Psoas muscle (tissue), 8 donors: ENCODE measurements at regions of chrX and their contacts with region 1.

Region 1: GRCh38 chrX:1649621-1650020 is 34.8 kb downstream of the ASMT start:
- DNase-seq: no peak
- ATAC-seq: no peak
- H3K4me3 ChIP-seq: no peak overlapping the region
- H3K27ac ChIP-seq: no peak overlapping the region
- H3K4me1 ChIP-seq: no peaks in the 10 kb centered on the region
- H3K27me3 ChIP-seq: peaks cover 0 to 18% (median 0%) of the 10 kb centered on the region in 3 donors
- CTCF ChIP-seq: no peak

Region 2: DNA sequence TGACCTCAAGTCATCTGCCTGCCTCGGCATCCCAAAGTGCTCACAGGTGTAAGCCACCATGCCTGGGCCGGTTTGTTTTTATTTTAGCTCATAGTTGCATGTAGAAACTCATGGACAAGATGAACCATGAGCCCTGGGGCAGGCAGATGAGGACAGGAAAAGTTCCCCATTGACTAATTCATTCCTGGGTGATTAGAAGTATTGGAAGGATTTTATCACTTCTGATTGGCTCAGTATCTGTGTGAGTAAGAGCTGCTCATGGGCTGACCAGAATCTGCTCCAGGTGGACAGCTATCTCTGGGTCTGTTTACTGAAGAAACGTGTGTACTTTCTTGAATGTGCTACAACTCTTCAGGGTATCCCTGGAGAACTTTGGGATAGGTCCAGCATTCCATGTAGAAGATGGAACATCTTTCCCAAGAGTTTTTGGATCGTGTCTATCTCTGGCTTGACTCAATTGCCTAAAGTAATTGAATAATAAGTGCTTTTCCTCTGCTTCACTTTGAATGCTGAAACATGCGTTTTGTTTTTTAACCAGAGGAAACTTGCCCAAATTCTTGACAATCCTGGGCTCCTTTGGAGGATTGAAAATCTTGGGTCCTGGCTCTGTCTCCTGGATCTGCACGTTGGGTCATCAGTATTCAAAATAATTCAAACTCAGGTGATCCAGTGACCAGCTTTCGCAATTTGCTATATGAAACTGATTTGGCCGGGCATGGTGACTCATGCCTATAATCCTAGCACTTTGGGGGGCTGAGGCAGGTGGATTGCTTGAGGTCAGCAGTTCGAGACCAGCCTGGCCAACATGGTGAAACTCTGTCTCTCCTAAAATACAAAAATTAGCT is 939.8 kb after region 1 on chrX:
- intact Hi-C with region 1: loop called (anchors 5 kb)
- DNase-seq: no peak
- ATAC-seq: peak in 1 of 4 donors; percentile 36
- H3K4me3 ChIP-seq: no peak overlapping the region
- H3K27ac ChIP-seq: no peak overlapping the region
- H3K4me1 ChIP-seq: no peaks in the 10 kb centered on the region
- H3K27me3 ChIP-seq: peaks cover 0 to 18% (median 4%) of the 10 kb centered on the region in 3 donors
- CTCF ChIP-seq: no peak

Region 3: DNA sequence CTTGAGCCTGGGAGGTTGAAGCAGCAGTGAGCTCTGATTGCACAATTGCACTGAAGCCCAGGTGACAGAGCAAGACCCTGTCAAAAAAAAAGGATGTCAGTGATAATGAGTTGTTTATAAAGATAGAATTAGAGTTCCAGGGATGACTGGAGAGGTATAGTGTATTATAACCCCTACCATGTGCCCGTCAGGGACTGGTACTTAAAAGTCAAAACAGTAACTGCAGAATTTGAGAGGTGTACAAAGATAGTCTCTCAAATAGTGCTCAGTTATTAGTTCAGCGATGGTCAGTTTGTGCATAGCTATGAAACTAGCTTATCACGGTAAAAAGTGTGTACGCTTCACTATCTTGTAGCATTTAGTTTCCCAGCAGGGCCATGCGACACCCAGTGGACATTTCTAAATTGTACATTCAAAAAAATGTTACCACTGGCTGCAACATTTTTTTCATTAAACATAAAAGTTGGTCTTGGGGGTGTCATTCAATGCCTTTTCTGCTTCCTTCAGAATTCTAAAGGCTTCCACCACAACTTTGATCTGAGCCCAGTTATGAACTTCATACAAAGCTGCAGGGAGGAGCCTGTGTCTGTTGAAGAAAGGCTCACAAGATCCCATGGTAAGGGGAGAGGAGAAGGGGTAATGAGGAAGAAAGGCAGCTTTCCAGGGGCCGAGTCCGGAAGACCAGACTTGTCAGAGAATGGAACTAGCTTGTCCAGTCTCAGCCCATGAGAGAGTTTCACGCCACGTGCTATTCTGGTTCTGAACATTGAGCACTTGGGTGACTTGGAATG is 1169.9 kb after region 1 on chrX:
- intact Hi-C with region 1: loop called in 1 of 2 experiments (anchors 10 kb)
- DNase-seq: no peak
- ATAC-seq: no peak
- H3K4me3 ChIP-seq: no peak overlapping the region
- H3K27ac ChIP-seq: no peak overlapping the region
- H3K4me1 ChIP-seq: no peaks in the 10 kb centered on the region
- H3K27me3 ChIP-seq: peaks cover 0 to 4% (median 0%) of the 10 kb centered on the region in 3 donors
- CTCF ChIP-seq: peak; percentile 34